ENCODE measurements at regions of chr7 and their contacts with region 1.

Region 1: DNA sequence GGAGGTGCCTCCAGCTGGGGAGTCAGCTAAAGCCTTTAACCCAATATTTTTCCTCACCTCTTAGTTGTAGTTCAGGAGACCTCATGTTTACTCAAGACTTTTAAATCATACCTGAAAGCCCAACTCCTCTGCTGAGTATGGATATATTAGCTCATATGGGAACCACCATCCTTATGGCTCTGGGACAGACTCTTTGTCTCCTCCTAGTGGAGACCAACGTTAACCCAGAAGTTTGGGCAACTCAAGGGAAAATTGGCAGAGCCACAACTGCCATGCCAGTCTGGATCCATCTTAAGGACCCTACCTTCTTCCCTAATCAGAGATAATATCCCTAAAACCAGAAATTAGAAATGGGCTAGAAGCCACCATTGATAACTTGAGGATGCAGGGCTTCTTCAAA is 80.8 kb downstream of the TMEM106B start:
- DNase-seq: peak in 2 of 5 donors; percentile 9 to 11
- H3K4me3 ChIP-seq: no peak overlapping the region
- H3K4me3 Mint-ChIP-seq: no peak overlapping the region
- H3K27ac ChIP-seq: no peak overlapping the region
- H3K27ac Mint-ChIP-seq: no peak overlapping the region
- H3K4me1 ChIP-seq: no peaks in the 10 kb centered on the region
- H3K4me1 Mint-ChIP-seq: peaks cover 0 to 4% (median 0%) of the 10 kb centered on the region in 4 donors
- H3K27me3 ChIP-seq: no peaks in the 10 kb centered on the region
- H3K27me3 Mint-ChIP-seq: peaks cover 0 to 3% of the 10 kb centered on the region in 2 donors

Region 2: DNA sequence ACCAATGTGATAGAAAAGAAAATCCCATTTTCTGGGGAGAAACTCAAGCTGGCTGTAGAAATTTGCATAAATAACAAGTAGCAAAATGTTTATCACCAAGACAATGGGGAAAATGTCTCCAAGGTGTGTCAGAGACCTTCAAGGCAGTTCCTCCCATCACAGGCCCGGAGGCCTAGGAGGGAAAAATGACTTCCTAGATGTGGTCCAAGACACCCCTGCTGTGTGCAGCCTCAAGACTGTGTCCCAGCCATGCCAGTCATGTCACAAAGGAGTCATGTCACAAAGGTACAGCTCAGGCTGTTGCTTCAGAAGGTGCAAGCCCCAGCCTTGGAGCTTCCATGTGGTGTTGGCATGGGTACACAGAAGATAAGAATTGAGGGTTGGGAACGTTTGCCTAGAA is 426.2 kb before region 1 on chr7:
- CTCF ChIA-PET with region 1: no interaction called
- POLR2A ChIA-PET with region 1: no interaction called
- intact Hi-C with region 1: no loop called
- DNase-seq: no peak
- H3K4me3 ChIP-seq: no peak overlapping the region
- H3K4me3 Mint-ChIP-seq: no peak overlapping the region
- H3K27ac ChIP-seq: no peak overlapping the region
- H3K27ac Mint-ChIP-seq: no peak overlapping the region
- H3K4me1 ChIP-seq: no peaks in the 10 kb centered on the region
- H3K4me1 Mint-ChIP-seq: no peaks in the 10 kb centered on the region
- H3K27me3 ChIP-seq: no peaks in the 10 kb centered on the region
- H3K27me3 Mint-ChIP-seq: no peaks in the 10 kb centered on the region

Region 3: DNA sequence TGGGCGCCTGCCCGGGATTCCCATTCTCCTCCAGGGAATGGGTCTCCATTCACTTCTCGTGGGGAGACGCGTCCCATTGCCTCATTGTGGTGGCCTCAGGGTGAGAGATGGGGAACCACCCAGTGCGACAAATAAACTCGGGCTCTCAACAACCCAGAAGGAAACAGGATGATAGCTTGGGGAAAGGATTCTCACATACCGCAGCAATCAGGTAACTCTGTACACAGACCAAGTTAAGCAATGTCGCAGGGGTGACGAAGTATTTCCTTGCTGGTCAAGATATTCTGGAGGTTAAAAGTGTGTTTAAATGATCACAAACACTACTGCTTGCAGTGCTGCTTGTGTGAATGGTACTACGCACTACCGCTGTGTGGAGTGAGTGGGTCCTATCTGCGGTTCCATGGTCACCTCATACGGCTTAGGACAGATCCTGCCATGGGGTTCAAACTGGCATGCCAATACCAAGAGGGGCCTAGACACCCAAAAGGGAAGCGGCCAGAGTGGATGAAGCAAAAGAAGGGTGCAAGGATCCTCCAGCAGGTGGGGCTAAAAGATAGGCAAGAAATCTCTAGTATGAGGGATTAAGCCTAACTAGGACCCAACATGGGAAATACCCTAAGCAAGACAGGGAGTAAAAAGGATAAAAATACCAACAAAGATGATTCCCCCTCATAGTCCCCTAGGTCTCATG is 224.6 kb before region 1 on chr7:
- CTCF ChIA-PET with region 1: interaction called, 15 read pairs
- POLR2A ChIA-PET with region 1: no interaction called
- intact Hi-C with region 1: loop called (anchors 1 kb)
- DNase-seq: peak; percentile 58 to 66 (median 63)
- H3K4me3 ChIP-seq: no peak overlapping the region
- H3K4me3 Mint-ChIP-seq: no peak overlapping the region
- H3K27ac ChIP-seq: no peak overlapping the region
- H3K27ac Mint-ChIP-seq: peak overlapping the region in 1 of 7 donors; percentile 2
- H3K4me1 ChIP-seq: no peaks in the 10 kb centered on the region
- H3K4me1 Mint-ChIP-seq: peaks cover 0 to 5% (median 3%) of the 10 kb centered on the region in 4 donors
- H3K27me3 ChIP-seq: no peaks in the 10 kb centered on the region
- H3K27me3 Mint-ChIP-seq: no peaks in the 10 kb centered on the region

Region 4: GRCh38 chr7:12111422-12112405 is 180.2 kb before region 1 on chr7:
- CTCF ChIA-PET with region 1: interaction called, 6 read pairs
- POLR2A ChIA-PET with region 1: no interaction called
- intact Hi-C with region 1: loop called (anchors 5 kb)
- DNase-seq: peak in 4 of 5 donors; percentile 12 to 22 (median 19)
- H3K4me3 ChIP-seq: no peak overlapping the region
- H3K4me3 Mint-ChIP-seq: peak overlapping the region; percentile 74 to 85 (median 79)
- H3K27ac ChIP-seq: no peak overlapping the region
- H3K27ac Mint-ChIP-seq: no peak overlapping the region
- H3K4me1 ChIP-seq: peaks cover 6% of the 10 kb centered on the region
- H3K4me1 Mint-ChIP-seq: peaks cover 7 to 18% (median 13%) of the 10 kb centered on the region in 4 donors
- H3K27me3 ChIP-seq: peaks cover 9% of the 10 kb centered on the region
- H3K27me3 Mint-ChIP-seq: peaks cover 25 to 26% of the 10 kb centered on the region in 2 donors

Measured in CD4-positive, alpha-beta memory T cell (primary cell).